ENCODE measurements at regions of chr6 and their contacts with region 1.

Region 1: GRCh38 chr6:47047479-47048407 is 5.6 kb upstream of the ADGRF1 start:
- DNase-seq: no peak
- ATAC-seq: peak; percentile 83

Region 2: GRCh38 chr6:46312654-46313053 is 735.1 kb before region 1 on chr6:
- intact Hi-C with region 1: no loop called
- DNase-seq: peak; percentile 47
- ATAC-seq: no peak

Region 3: DNA sequence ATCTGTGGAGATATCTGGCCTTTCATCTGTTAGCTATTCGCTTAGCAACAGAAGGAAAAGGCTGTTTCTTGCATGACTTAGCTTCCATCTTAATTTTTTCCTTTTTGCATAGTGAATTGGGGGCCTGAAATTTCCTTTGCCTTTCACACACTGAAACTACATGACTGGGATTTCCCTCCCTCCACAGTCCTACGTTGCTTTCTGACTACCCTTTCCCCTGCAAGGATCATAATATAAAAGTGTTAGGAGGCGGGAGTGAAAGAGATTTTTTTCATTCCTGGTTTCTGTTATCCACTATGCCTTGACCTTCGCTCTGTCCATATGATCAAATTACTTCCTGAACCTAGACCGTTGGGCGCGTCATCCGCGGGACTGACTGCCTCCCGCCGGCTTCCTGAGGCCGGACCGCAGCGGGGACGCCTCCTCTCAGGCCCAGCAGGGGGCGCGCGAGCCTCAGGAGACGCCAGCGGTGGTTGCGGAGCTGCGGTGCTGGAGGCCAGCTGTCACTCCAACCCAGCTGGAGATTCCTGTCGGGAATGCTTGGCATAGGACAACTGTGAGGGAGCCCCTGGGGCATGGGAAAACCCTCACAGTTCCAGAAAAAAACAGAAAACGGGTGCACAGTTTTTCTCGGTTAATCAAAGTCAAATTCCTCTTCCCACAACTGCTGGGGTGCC is 198.9 kb before region 1 on chr6:
- intact Hi-C with region 1: loop called (anchors 1 kb)
- DNase-seq: peak; percentile 93
- ATAC-seq: peak; percentile 93

Region 4: DNA sequence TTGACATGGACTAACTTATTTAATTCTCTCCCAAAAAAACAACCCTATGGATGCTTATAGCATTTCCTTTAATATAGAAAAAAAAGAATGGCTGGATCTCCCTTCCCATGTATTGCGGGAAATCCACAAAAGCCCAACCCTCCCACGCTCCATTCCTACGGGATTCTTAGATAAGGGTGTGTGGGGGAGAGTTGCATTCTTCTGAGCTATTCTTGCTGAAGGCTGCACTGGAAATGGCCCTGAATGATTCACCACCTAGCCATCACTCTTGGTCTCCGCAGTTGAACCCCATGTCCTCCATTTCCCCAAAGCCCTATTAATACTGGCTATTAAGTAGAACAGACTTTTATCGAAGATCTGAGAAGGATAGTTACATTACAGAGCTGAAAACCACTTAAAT is 84.1 kb before region 1 on chr6:
- intact Hi-C with region 1: no loop called
- DNase-seq: no peak
- ATAC-seq: peak; percentile 44

Region 5: DNA sequence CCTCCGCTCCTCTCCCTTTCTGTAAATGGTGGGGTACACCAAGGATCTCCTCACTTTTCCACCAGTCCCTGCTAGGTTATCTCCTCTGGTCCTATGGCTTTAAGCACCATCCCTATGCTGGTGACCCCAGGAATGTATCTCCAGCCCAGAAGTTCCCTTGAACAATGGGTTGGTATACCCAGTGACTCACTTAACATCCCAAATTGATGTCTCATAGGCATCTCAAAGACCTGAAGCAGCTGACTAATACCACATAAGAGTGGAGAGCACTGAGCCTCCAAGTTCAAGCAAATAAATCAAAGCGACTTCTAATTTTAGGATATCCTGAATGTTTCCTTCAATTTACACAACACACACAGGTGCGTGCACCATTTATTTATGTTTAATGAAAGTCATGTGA is 53.9 kb before region 1 on chr6:
- intact Hi-C with region 1: loop called (anchors 5 kb)
- DNase-seq: no peak
- ATAC-seq: no peak

Region 6: GRCh38 chr6:47009566-47009965 is 38.2 kb before region 1 on chr6:
- intact Hi-C with region 1: loop called (anchors 5 kb)
- DNase-seq: no peak
- ATAC-seq: peak; percentile 42

Measured in Right ventricle myocardium inferior (tissue), 1 donor.